Cardiac septum (tissue), 1 donor: ENCODE measurements at regions of chr12 and their contacts with region 1.

Region 1: DNA sequence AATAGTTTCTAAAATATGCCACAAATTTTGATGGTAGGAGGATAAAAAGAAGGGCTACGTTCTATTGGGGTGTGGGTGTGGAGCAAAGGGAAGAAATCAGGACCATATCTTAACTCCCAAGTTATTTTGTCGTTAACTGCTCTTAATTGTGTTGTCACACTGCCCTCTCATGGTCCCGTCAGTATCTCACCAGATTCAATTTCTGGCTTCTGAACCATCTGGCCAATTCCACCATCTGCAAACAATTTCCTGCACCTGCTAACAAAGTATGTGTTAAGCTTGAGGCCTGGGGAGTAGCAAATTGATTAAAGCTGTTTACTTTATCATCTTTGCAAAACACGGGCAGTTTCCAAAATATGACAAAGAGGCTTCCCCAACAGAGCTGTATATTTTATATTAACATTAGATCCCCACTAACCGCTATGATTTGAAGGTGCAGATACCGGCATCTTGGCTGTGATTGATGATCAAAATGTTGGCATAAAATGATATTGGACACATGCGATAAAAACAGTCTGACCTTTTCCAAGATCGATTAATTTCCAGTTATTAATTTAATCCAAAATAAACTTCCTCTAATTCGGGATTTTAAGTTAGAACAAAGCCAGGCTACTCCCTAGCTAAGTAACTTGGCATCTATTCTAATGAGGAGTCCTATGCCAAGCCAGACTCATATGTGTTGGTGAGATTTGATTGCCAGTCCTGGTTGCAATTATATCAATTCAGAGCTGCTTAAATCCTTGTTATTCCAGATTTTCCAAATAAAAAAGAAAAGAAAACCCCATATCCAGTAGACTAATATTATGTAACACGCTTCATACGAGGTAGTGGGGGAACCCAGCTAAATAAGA is 6.9 kb upstream of the DNM1L start:
- DNase-seq: no peak

Region 2: GRCh38 chr12:32183650-32184049 is 488.5 kb before region 1 on chr12:
- intact Hi-C with region 1: no loop called
- DNase-seq: no peak

Region 3: DNA sequence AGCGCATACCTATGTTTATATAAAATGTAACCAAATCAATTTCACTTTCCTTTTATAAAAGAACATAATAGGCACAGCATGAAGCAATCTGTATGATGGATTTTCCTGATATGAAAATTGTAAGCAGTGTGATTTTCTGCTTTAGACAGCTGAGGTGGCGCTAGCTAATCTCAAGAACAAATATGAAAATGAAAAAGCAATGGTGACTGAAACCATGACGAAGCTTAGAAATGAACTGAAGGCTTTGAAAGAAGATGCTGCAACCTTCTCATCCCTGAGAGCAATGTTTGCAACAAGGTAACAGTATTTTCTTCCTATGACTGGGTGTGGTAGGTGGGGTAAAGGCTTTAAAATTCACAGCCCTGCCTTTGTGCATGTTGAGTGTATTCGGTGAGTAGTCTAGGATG is 337.8 kb before region 1 on chr12:
- intact Hi-C with region 1: no loop called
- DNase-seq: no peak

Region 4: GRCh38 chr12:32365473-32366064 is 306.6 kb before region 1 on chr12:
- intact Hi-C with region 1: loop called (anchors 1 kb)
- DNase-seq: no peak

Region 5: GRCh38 chr12:32821710-32822109 is 149.6 kb after region 1 on chr12:
- intact Hi-C with region 1: no loop called
- DNase-seq: no peak